ENCODE measurements at regions of chr6 and their contacts with region 1.

Region 1: GRCh38 chr6:27553123-27553904 is 80.4 kb upstream of the ZNF184 start:
- DNase-seq: peak; percentile 58

Region 2: GRCh38 chr6:27452496-27452897 is 100.8 kb before region 1 on chr6:
- CTCF ChIA-PET with region 1: no interaction called
- POLR2A ChIA-PET with region 1: no interaction called
- DNase-seq: no peak

Region 3: GRCh38 chr6:27601668-27602254 is 48.4 kb after region 1 on chr6:
- CTCF ChIA-PET with region 1: interaction called, 3 read pairs
- POLR2A ChIA-PET with region 1: interaction called, 10 read pairs
- DNase-seq: peak; percentile 37

Region 4: DNA sequence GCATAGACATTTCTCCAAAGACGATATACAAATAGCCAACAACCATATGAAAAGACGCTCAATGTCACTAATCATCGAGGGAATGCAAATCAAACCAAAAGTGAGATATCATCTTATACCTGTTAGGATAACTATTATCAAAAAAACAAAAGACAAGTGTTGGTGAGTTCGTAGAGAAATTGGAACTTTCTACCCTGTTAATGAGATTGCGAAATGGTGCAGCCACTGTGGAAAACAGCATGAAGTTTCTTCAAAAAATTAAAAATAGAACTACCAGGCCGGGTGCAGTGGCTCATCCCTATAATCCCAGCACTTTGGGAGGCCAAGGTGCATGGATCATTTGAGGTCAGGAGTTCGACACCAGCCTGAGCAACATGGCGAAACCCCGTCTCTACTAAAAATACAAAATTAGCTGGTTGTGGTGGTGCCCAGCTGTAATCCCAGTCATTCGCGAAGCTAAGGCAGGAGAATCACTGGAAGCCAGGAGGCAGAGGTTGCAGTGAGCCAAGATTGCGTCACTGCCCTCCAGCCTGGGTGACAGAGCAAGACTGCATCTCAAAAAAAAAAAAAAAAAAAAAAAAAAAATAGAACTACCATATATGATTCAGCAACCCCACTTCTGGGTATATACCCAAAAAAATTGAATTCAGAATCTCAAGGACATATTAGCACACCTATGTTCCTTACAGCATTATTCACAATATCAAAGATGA is 89.6 kb after region 1 on chr6:
- CTCF ChIA-PET with region 1: no interaction called
- POLR2A ChIA-PET with region 1: no interaction called
- DNase-seq: no peak

Region 5: GRCh38 chr6:27966044-27966443 is 412.7 kb after region 1 on chr6:
- CTCF ChIA-PET with region 1: no interaction called
- POLR2A ChIA-PET with region 1: no interaction called
- DNase-seq: no peak

Measured in HEK293T (cell line).